Naive thymus-derived CD8-positive, alpha-beta T cell (primary cell): ENCODE measurements at regions of chr2 and their contacts with region 1.

Region 1: DNA sequence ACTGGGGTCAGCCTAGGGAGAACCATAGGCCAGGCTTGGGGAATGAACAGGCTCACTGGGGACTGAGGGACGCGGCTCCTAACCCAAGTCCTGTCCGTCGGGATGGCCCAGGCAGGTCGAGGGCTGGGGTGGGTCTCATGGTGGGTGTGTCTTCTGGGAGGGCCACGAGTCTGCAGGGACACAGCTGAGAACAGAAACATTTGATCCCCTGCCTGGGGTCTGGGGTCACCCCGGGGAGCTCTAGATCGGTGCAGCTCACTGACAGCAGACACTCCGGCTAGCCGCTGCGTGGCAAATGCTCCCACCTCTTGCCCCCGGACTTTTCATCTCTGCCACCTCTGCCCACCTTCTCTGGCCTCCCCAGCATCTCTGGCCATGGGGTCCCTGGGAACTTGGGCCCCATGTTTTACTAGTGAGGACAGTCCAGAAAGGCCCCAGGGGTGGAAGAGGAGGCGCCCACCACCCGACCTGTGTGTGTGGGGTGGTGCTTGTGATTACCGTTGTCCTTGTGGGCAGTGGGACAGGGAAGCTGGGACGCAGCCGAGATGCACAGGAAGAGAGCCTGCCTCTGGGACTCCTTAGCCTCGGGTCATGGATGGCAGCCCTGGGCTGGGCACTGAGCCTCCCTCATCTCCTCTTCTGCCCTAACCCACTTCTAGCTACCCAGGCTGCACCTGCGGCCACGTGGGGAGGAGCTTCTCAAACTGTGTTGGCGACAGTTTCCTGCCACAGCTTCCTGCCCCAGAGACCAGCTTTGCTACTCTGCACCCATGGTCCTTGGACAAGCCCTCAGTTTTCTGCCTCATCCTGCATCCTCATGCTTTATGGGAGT is 4.9 kb downstream of the ZAP70 start:
- DNase-seq: peak; percentile 52 to 87 (median 73)
- ATAC-seq: peak; percentile 81 to 93
- H3K4me3 Mint-ChIP-seq: peak overlapping the region; percentile 88 to 99 (median 94)
- H3K27ac Mint-ChIP-seq: peak overlapping the region; percentile 93 to 100 (median 99)
- H3K4me1 Mint-ChIP-seq: peaks cover 59 to 90% (median 80%) of the 10 kb centered on the region in 4 donors
- H3K27me3 Mint-ChIP-seq: no peaks in the 10 kb centered on the region

Region 2: GRCh38 chr2:96320728-96321622 is 1397.3 kb before region 1 on chr2:
- POLR2A ChIA-PET with region 1: interaction called, 10 read pairs
- DNase-seq: peak in 1 of 10 donors; percentile 9
- ATAC-seq: peak; percentile 26 to 35
- H3K4me3 Mint-ChIP-seq: peak overlapping the region; percentile 75 to 94 (median 90)
- H3K27ac Mint-ChIP-seq: peak overlapping the region; percentile 50 to 87 (median 74)
- H3K4me1 Mint-ChIP-seq: peaks cover 25 to 66% (median 60%) of the 10 kb centered on the region in 4 donors
- H3K27me3 Mint-ChIP-seq: no peaks in the 10 kb centered on the region

Region 3: GRCh38 chr2:97355887-97356286 is 362.4 kb before region 1 on chr2:
- POLR2A ChIA-PET with region 1: no interaction called
- DNase-seq: no peak
- ATAC-seq: no peak
- H3K4me3 Mint-ChIP-seq: no peak overlapping the region
- H3K27ac Mint-ChIP-seq: no peak overlapping the region
- H3K4me1 Mint-ChIP-seq: peaks cover 0 to 8% (median 1%) of the 10 kb centered on the region in 4 donors
- H3K27me3 Mint-ChIP-seq: peaks cover 15 to 46% (median 22%) of the 10 kb centered on the region in 5 donors

Region 4: DNA sequence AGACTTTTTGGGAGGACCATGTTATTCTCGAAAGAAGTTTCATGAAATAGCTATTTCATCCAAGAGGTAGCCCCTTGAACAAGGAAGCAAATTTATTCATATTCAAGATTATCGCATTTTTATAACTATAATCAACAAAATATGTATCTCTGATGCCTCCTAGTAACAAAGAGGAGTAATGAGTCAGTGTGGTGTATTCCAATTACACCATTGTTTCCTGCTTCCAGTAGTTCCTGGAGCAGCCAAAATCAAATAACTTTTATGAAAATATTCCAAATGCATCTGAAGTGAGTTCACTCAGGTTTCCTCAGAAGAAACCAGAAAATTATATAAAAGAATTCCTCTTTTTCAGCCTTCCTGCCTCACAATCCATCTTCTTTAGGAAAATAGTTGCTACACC is 171.6 kb before region 1 on chr2:
- POLR2A ChIA-PET with region 1: no interaction called
- DNase-seq: no peak
- ATAC-seq: no peak
- H3K4me3 Mint-ChIP-seq: no peak overlapping the region
- H3K27ac Mint-ChIP-seq: no peak overlapping the region
- H3K4me1 Mint-ChIP-seq: peaks cover 0 to 4% (median 0%) of the 10 kb centered on the region in 4 donors
- H3K27me3 Mint-ChIP-seq: no peaks in the 10 kb centered on the region

Region 5: GRCh38 chr2:97645695-97646629 is 72.3 kb before region 1 on chr2 and contains the start of gene COX5B:
- POLR2A ChIA-PET with region 1: interaction called, 13 read pairs
- DNase-seq: peak; percentile 93 to 99 (median 98)
- ATAC-seq: peak; percentile 92 to 95
- H3K4me3 Mint-ChIP-seq: peak within 1 kb of the TSS; percentile 93 to 99 (median 98)
- H3K27ac Mint-ChIP-seq: peak within 1 kb of the TSS; percentile 92 to 99 (median 98)
- H3K4me1 Mint-ChIP-seq: peaks cover 17 to 27% (median 23%) of the 10 kb centered on the region in 4 donors
- H3K27me3 Mint-ChIP-seq: no peaks in the 10 kb centered on the region
- polyA plus RNA-seq, gene COX5B: 321 to 373 (median 350) TPM

Region 6: DNA sequence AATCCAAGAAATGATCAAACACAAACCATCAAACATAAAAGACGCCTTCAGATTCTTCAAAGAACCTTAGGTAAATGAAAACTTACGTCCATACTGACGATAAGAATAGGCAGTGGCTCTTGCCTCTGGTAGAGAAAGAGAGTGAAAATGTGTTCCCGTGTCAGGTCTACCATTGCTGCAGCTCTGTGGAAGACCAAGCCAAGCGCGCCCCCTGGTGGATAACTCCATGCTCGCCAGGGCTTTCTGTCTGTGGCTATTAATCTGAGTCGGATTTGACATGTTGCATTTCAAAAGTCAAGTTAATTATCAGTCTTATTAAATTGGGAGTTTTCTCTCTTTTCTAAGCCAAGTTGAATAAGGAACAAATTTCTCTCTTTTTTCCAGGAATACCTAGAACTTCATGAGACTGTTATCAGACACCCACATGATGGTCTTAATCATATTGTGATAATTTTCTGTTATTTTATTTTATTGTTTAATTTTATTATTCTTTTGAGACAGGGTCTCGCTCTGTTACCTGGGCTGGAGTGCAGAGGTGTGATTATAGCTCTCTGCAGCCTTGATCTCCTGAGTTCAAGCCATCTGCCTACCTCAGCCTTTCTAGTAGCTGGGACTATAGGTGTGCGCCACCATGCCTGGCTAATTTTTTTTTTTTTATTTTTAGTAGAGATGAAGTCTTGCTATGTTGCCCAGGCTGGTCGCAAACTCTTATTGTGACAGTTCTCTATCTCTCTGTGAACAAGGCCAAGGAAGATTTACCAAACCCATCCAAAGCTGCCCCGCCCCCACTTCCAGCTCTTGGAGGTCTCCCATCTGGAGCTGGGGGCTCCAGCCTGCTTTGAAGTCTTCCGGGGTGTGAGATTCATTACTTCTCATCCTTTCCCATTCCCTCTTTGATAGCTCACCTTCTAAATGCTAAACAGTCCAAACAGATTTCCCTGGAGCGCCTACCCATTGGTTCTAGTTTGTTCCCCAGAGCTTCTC is 20.7 kb before region 1 on chr2:
- POLR2A ChIA-PET with region 1: interaction called, 10 read pairs
- DNase-seq: peak; percentile 77 to 95 (median 90)
- ATAC-seq: peak; percentile 95 to 97
- H3K4me3 Mint-ChIP-seq: peak overlapping the region in 2 of 10 donors; percentile 7 to 22
- H3K27ac Mint-ChIP-seq: peak overlapping the region in 1 of 10 donors; percentile 50
- H3K4me1 Mint-ChIP-seq: peaks cover 5 to 11% (median 7%) of the 10 kb centered on the region in 4 donors
- H3K27me3 Mint-ChIP-seq: peaks cover 0 to 3% (median 0%) of the 10 kb centered on the region in 5 donors

Region 7: DNA sequence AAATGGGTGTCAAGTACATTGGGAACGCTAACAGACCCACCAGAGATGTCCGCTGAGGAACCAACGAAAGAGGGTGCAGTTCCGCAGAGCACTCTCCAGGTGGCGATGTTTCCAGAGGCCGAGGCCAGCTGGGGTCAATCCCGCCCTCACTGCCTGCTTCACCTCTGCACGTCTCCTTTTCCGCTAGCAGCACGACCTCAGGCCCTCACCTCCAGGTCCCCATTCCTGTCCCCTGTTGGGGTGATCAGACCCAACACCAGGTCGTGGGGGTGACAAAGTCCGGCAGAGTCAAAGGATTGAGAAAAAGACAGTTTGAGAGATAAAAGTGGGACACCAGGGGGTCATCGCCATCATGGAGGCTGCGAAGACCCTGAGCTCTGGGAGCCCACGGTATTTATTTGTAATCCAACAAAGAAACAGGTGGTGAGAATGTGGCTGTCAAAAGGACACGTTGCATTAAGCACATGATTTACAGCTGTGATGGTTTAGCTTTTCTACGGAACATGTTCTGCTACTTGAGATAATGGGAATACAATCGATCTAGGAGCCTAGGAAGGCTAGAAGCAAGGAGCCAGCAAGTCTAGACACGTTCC is 22.4 kb after region 1 on chr2:
- POLR2A ChIA-PET with region 1: interaction called, 159 read pairs
- DNase-seq: peak in 7 of 10 donors; percentile 20 to 65 (median 43)
- ATAC-seq: peak; percentile 55 to 59
- H3K4me3 Mint-ChIP-seq: peak overlapping the region in 2 of 10 donors; percentile 4 to 18
- H3K27ac Mint-ChIP-seq: peak overlapping the region; percentile 22 to 90 (median 77)
- H3K4me1 Mint-ChIP-seq: peaks cover 33 to 68% (median 63%) of the 10 kb centered on the region in 4 donors
- H3K27me3 Mint-ChIP-seq: no peaks in the 10 kb centered on the region

Region 8: GRCh38 chr2:97798416-97798815 is 80.1 kb after region 1 on chr2:
- POLR2A ChIA-PET with region 1: no interaction called
- DNase-seq: no peak
- ATAC-seq: no peak
- H3K4me3 Mint-ChIP-seq: no peak overlapping the region
- H3K27ac Mint-ChIP-seq: no peak overlapping the region
- H3K4me1 Mint-ChIP-seq: no peaks in the 10 kb centered on the region
- H3K27me3 Mint-ChIP-seq: no peaks in the 10 kb centered on the region